ENCODE measurements at regions of chr6 and their contacts with region 1.

Region 1: DNA sequence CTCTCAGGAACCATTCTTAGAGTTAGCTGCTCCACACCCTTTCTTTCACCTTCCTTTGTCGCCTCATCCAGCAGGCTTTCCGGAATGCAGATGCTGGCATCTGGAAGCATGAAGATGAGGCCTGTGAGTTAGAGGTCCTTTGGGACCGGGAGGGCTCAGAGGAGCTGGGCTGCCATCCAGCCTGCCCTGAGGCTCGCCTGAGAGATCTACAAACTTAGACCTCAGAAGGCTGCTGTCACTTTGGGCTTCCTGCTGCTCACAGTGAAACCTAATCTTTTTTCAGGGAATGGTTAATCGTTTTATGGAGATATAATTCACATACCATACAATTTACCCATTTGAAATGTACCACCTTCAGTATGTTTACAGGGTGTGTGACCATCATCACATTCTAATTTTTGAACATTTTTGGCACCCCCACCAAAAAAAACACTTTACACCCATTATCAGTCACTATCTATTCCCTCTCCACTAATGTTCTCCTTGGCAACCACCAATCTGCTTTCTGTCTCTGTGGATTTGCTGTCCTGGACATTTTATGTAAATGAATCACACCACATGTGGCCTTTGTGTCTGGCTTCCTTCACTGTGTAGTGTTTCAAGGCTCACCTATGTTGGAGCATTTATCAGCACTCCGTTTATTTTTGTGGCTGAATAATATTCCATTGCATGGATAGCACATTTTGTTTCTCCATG is 20.0 kb upstream of the MPC1 start:
- DNase-seq: no peak
- ATAC-seq: no peak
- H3K4me3 Mint-ChIP-seq: no peak overlapping the region
- H3K27ac Mint-ChIP-seq: no peak overlapping the region
- H3K4me1 Mint-ChIP-seq: peaks cover 4% of the 10 kb centered on the region
- H3K27me3 Mint-ChIP-seq: no peaks in the 10 kb centered on the region
- CTCF ChIP-seq: no peak

Region 2: DNA sequence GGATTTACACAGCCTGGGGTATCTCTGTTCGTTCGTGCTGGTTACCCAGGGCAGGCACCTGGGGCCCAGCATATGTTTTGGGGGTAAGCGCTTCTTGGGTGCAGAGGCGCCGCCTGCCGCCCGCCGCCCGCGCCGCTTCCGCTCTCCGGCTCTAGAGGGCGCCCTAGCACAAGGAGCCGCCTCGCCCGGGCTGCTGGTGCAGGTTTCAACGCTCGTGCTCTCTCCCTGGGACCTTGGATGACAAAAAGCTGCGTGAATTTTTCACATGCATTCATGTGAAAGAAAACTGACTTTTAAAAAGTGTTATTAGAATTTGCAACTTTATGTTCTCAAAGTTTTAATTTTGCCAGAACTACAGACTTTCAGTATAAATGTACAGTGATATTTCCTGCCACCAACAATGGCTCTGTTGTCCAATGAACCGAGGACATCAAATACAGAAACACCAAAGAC is 127.0 kb before region 1 on chr6:
- CTCF ChIA-PET with region 1: interaction called, 57 read pairs
- POLR2A ChIA-PET with region 1: interaction called, 3 read pairs
- intact Hi-C with region 1: loop called (anchors 2 kb)
- DNase-seq: peak; percentile 78
- ATAC-seq: peak; percentile 97
- H3K4me3 Mint-ChIP-seq: no peak overlapping the region
- H3K27ac Mint-ChIP-seq: no peak overlapping the region
- H3K4me1 Mint-ChIP-seq: peaks cover 6% of the 10 kb centered on the region
- H3K27me3 Mint-ChIP-seq: peaks cover 1% of the 10 kb centered on the region
- CTCF ChIP-seq: peak; percentile 99

Region 3: GRCh38 chr6:166284640-166285039 is 118.1 kb before region 1 on chr6:
- CTCF ChIA-PET with region 1: interaction called, 10 read pairs
- POLR2A ChIA-PET with region 1: no interaction called
- intact Hi-C with region 1: no loop called
- DNase-seq: no peak
- ATAC-seq: no peak
- H3K4me3 Mint-ChIP-seq: no peak overlapping the region
- H3K27ac Mint-ChIP-seq: no peak overlapping the region
- H3K4me1 Mint-ChIP-seq: no peaks in the 10 kb centered on the region
- H3K27me3 Mint-ChIP-seq: peaks cover 3% of the 10 kb centered on the region
- CTCF ChIP-seq: no peak

Region 4: DNA sequence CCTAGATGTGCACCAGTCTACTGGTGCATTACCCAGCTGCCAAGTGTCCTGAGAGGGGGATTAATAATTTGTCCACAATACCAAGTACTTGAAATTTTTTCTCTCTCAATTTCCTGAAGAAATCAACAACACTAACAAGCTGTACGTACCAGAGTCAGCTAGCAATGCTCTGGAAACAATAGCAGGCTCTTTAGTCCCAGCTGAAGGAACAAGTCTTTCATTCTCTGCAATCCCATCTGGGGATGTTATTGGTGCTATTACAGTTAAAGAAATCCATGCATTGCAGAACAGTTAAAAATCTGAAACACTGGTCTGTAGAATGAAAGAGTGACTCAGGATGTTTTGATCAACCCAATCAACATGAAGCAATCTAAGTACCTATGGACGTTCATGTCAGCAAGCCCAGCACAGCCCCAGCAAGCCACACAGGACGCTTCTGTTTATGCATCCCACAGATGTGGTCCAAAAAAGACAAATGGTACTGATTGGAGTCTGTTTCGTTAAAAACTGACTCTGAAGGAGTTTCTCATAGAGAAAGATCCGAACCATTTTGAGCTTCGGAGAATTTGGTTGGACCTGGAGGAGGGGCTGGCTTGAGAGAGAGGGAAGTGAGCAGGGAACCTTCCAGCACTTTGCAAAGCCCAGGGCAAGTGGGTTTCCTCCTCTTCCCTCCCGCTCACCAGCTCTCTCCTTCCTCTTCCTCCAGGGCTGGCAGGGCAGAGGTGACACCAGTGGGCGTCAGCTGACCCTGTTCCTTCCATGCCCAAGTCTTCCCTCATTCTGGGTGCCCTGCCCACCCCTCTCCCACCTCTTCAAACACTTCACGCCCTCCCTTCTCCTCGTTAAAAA is 106.5 kb before region 1 on chr6:
- CTCF ChIA-PET with region 1: interaction called, 12 read pairs
- POLR2A ChIA-PET with region 1: no interaction called
- intact Hi-C with region 1: no loop called
- DNase-seq: no peak
- ATAC-seq: no peak
- H3K4me3 Mint-ChIP-seq: no peak overlapping the region
- H3K27ac Mint-ChIP-seq: no peak overlapping the region
- H3K4me1 Mint-ChIP-seq: peaks cover 5% of the 10 kb centered on the region
- H3K27me3 Mint-ChIP-seq: peaks cover 14% of the 10 kb centered on the region
- CTCF ChIP-seq: no peak

Region 5: GRCh38 chr6:166307082-166308032 is 95.4 kb before region 1 on chr6:
- CTCF ChIA-PET with region 1: interaction called, 102 read pairs
- POLR2A ChIA-PET with region 1: no interaction called
- intact Hi-C with region 1: loop called (anchors 2 kb)
- DNase-seq: no peak
- ATAC-seq: peak; percentile 61
- H3K4me3 Mint-ChIP-seq: peak overlapping the region; percentile 31
- H3K27ac Mint-ChIP-seq: no peak overlapping the region
- H3K4me1 Mint-ChIP-seq: no peaks in the 10 kb centered on the region
- H3K27me3 Mint-ChIP-seq: peaks cover 38% of the 10 kb centered on the region
- CTCF ChIP-seq: no peak

Region 6: GRCh38 chr6:166313255-166314070 is 89.3 kb before region 1 on chr6:
- CTCF ChIA-PET with region 1: interaction called, 102 read pairs
- POLR2A ChIA-PET with region 1: no interaction called
- intact Hi-C with region 1: loop called (anchors 2 kb)
- DNase-seq: peak; percentile 76
- ATAC-seq: peak; percentile 96
- H3K4me3 Mint-ChIP-seq: no peak overlapping the region
- H3K27ac Mint-ChIP-seq: no peak overlapping the region
- H3K4me1 Mint-ChIP-seq: no peaks in the 10 kb centered on the region
- H3K27me3 Mint-ChIP-seq: peaks cover 14% of the 10 kb centered on the region
- CTCF ChIP-seq: peak; percentile 76

Region 7: DNA sequence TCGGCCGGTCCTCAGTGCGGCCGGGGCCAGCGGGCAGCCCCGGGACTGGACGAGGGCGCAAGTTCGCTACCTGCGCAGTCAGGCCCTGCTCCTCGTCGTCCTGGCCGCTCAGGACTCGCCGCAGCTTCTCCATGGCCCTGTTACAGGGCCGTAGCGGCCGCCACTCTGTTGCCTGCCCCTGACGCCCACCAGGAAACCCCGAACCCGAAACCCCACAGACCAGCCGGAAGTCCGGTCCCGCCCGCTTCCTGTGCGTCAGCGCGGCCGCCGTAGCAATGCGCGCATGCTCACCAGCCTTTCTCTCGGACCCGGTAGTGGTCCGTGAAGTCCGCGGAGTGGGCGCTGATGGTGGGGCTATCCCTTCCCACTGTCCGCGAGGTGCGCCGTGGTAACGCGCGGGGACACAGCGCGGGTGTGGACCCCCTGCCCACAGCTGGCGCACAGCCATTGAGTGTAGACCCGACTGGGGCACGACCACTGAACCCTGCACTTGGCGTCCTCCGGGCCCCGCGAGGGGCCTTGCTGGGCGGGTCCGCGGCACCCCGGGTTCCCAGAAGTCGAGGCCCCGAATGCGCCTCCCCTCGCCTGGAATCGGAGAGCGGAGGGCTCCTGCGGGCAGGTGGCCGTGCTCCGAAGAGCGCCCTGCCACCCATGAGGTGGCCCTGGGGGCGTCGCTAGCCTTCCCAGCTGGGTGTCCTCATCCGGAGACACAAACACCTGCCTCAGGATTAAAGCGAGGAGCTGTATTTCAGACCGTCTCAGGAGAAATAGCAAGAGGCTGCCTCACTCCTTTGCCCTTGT is 60.2 kb before region 1 on chr6 and contains the start of gene SFT2D1:
- CTCF ChIA-PET with region 1: no interaction called
- POLR2A ChIA-PET with region 1: no interaction called
- intact Hi-C with region 1: no loop called
- DNase-seq: peak; percentile 86
- ATAC-seq: peak; percentile 83
- H3K4me3 Mint-ChIP-seq: peak within 1 kb of the TSS; percentile 90
- H3K27ac Mint-ChIP-seq: peak within 1 kb of the TSS; percentile 85
- H3K4me1 Mint-ChIP-seq: peaks cover 7% of the 10 kb centered on the region
- H3K27me3 Mint-ChIP-seq: no peaks in the 10 kb centered on the region
- CTCF ChIP-seq: no peak
- total RNA-seq, gene SFT2D1: 39.0 to 42.6 TPM

Region 8: GRCh38 chr6:166439366-166440091 is 36.8 kb after region 1 on chr6:
- CTCF ChIA-PET with region 1: interaction called, 14 read pairs
- POLR2A ChIA-PET with region 1: no interaction called
- intact Hi-C with region 1: no loop called
- DNase-seq: no peak
- ATAC-seq: no peak
- H3K4me3 Mint-ChIP-seq: no peak overlapping the region
- H3K27ac Mint-ChIP-seq: no peak overlapping the region
- H3K4me1 Mint-ChIP-seq: peaks cover 18% of the 10 kb centered on the region
- H3K27me3 Mint-ChIP-seq: no peaks in the 10 kb centered on the region
- CTCF ChIP-seq: no peak

Measured in activated CD8-positive, alpha-beta T cell treated with anti-CD3 and anti-CD28 coated beads for 36 hours (primary cell).